Activated CD8-positive, alpha-beta memory T cell treated with anti-CD3 and anti-CD28 coated beads, Interleukin-2, amount 10 ng/mL, durations not matched to agents 7 days and 5 days (primary cell): ENCODE measurements at regions of chr16 and their contacts with region 1.

Region 1: DNA sequence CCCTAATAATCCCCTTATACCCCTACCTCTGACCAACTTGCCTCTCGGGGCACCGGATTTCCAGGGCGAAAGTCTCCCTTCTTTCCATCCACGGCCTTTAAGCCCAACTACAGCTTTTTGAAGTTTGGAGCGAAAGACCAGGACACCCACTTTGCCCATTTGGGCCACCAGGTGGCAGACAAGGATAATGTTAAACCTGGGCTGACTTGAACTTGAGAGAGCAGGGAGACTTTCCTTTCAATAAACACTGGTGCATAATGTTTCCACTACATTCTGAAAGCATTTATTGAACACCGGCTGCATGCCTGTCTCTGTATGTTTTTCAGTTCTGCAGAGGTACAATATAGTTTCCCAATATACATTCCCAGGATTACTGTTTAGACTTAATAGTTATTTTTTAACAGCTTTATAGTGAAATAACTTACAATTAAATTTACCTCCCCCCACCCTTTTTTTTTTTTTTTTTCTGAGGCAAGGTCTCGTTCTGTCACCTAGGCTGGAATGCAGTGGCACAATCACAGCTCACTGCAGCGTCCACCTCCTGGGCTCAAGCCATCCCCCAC is 6.9 kb upstream of the CES3 start:
- DNase-seq: peak; percentile 88
- ATAC-seq: peak; percentile 89
- H3K4me3 Mint-ChIP-seq: no peak overlapping the region
- H3K27ac Mint-ChIP-seq: no peak overlapping the region
- H3K4me1 Mint-ChIP-seq: peaks cover 40% of the 10 kb centered on the region
- H3K27me3 Mint-ChIP-seq: peaks cover 21% of the 10 kb centered on the region

Region 2: GRCh38 chr16:66970775-66971725 is 16.9 kb after region 1 on chr16:
- CTCF ChIA-PET with region 1: interaction called, 86 read pairs
- DNase-seq: no peak
- ATAC-seq: no peak
- H3K4me3 Mint-ChIP-seq: no peak overlapping the region
- H3K27ac Mint-ChIP-seq: no peak overlapping the region
- H3K4me1 Mint-ChIP-seq: peaks cover 16% of the 10 kb centered on the region
- H3K27me3 Mint-ChIP-seq: no peaks in the 10 kb centered on the region